Prostate gland (tissue), 2 donors: ENCODE measurements at regions of chr5 and their contacts with region 1.

Region 1: GRCh38 chr5:148443998-148444397 is 60.2 kb downstream of the FBXO38 start:
- DNase-seq: peak; percentile 49
- H3K4me3 ChIP-seq: no peak overlapping the region
- H3K27ac ChIP-seq: no peak overlapping the region
- H3K4me1 ChIP-seq: no peaks in the 10 kb centered on the region
- H3K27me3 ChIP-seq: no peaks in the 10 kb centered on the region
- CTCF ChIP-seq: peak; percentile 41 to 88 (median 84)
- POLR2A ChIP-seq: no peak

Region 2: DNA sequence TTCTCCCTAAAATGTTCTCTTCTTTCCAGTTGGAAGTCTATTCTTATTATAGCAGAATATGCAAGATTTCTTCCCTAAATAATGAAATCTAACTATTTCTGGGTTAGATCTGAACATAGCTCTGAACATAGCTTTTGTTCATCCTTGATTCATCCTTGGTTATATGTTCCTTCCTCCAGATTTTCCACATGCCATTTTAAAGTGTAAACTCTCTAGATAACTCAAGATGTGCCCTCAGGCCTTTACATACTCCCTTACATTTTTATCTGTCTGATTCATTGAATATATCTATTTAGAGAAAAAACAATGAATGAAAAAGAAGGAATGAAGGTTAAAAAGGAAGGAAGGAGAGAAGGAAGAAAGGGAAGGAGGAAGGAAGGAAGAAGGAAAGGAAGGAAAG is 40.7 kb after region 1 on chr5:
- intact Hi-C with region 1: loop called (anchors 5 kb)
- DNase-seq: no peak
- H3K4me3 ChIP-seq: no peak overlapping the region
- H3K27ac ChIP-seq: no peak overlapping the region
- H3K4me1 ChIP-seq: no peaks in the 10 kb centered on the region
- H3K27me3 ChIP-seq: no peaks in the 10 kb centered on the region
- CTCF ChIP-seq: no peak
- POLR2A ChIP-seq: no peak